Left colon (tissue), 2 donors: ENCODE measurements at regions of chr9 and their contacts with region 1.

Region 1: DNA sequence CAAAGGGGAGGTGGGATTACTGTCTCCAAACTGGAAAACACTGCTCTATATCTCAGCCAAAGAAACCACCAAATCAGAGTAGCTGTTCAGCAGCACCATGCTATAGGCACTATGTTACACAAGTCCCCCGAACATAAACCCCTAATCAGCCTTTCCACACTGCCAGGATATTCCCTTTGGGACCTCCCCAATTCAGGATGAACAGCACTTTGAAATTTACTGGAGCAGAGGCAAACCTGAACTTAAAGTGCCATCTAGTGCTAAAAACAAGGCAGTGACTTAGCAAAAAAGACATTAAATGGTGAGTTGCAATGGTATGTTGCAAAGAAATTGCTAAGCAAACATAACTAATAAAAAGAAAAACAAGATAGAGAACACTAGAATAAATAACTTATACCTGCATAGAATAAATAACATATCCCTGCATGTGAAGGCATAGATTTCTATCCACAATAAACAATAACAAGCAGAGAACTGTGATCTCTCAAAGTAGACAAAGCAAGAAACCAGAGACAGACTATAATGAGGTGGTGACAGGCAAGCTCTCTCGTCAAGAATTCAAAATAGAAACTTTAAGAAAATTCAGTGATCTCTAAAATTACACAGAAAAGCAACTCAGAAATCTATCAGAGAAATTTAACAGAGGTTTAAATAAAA is 584.4 kb upstream of the ACO1 start:
- DNase-seq: no peak
- ATAC-seq: no peak

Region 2: GRCh38 chr9:31119882-31120454 is 680.1 kb before region 1 on chr9:
- intact Hi-C with region 1: loop called in 1 of 2 experiments (anchors 10 kb)
- DNase-seq: peak in 1 of 2 donors; percentile 6
- ATAC-seq: peak; percentile 40

Region 3: GRCh38 chr9:31715250-31715649 is 84.8 kb before region 1 on chr9:
- intact Hi-C with region 1: no loop called
- DNase-seq: no peak
- ATAC-seq: no peak

Region 4: GRCh38 chr9:31854187-31854586 is 54.1 kb after region 1 on chr9:
- intact Hi-C with region 1: no loop called
- DNase-seq: no peak
- ATAC-seq: no peak

Region 5: DNA sequence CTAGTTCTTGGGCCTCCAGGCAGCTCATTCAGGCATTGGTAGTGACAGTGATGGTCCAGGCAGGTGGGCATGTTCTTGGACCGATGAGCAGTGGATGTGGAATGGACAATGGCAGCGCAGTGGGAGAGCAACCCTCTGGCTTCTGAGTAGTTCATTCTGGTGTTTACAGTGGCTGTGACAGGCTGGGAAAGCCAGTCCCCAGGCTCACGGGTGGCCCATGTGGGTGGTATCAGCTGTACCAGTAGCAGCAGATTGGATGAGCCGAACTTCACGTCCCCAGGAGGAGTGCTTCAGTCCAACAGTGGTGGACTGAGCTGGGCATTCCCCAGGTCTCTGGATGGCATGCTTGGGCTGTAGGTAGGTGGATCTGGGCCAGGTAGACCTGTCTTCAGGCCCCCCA is 68.7 kb after region 1 on chr9:
- intact Hi-C with region 1: no loop called
- DNase-seq: no peak
- ATAC-seq: no peak

Region 6: DNA sequence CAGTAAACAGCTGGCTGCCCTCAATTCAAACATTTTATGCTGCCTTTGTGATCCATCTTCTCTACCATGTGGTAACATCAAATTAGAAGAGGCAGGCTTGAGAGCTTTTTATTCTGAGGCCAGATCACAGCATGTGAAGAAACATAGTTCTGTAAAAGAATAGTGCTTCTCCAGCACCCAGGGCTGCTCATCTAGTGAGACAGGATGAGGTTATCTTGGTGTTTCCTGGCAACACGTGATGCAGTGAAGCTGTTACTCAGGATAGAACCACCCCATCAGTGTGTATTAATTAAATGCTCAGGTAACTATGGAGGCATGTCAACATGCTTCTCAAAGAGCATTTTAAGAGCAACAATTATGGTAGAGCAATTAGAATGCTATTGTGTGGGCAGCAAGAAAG is 183.8 kb after region 1 on chr9:
- intact Hi-C with region 1: no loop called
- DNase-seq: no peak
- ATAC-seq: no peak

Region 7: GRCh38 chr9:32069169-32069813 is 269.2 kb after region 1 on chr9:
- intact Hi-C with region 1: loop called in 1 of 2 experiments (anchors 10 kb)
- DNase-seq: no peak
- ATAC-seq: no peak